ENCODE measurements at regions of chr9 and their contacts with region 1.

Region 1: DNA sequence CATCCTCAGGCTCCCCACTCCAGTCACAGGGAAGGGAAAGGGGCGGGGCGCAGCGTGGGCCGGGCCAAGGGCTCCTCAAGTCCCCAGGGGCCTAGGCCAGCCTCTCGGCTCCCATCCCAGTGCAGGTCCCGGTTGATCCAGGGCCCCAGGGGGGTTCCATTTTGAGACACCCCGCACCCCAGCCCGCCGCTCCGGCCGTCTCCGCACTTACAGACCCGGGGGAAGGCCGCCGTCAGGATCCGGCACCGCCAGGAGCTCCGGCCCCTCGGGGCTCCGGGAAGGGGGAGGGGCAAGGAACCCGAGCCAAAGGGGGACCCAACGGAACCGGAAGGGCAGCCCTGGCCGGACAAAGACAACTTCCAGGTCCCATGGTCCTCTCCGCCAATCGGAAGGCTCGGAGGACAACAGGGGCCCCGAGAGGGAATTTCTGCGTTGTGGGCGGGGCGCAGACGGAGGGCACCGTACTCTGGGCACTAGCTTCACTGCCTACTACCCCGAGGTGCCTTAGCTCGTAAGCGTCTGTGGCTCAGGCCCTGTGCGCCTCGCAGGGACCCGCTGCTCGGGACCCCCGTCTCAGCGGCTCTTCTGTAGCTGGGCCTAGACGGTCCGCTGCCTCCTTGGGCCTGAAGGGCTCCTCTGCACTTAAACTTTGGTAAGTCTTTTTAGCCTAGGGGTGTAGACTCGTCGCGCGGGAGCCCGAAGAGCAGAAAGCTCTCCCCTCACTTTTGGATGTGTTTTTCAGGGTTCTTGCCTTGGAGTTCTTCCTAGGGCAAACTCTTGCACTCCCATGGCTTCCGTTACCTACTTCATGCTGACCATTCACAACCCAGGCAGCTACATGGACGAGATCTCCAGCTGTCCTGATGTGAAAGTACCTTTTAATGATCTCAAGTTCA is at the start of gene ZBTB26:
- DNase-seq: peak; percentile 90
- H3K4me3 Mint-ChIP-seq: no peak within 1 kb of the TSS
- H3K27ac Mint-ChIP-seq: peak within 1 kb of the TSS; percentile 79
- H3K4me1 Mint-ChIP-seq: peaks cover 13% of the 10 kb centered on the region
- H3K27me3 Mint-ChIP-seq: no peaks in the 10 kb centered on the region
- total RNA-seq, gene ZBTB26: 8.4 to 8.5 TPM

Region 2: DNA sequence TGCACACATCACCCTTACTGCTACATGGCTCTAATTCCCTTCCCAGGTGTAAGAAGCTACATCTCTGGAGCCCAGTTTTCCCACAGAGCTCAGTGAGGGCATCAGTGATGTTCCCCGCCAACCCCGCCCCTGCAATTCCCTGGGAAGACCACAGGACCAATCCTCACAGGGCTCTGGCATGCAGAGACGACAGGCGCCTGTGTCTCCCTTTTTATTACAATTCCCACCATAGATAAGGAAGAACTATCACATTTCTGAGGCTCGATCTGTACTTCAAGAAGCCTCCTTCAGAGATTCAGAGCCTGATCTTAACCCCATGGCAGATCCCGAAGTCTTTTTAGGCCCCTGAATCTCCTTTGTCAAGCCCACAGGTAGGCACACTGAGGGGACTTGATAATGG is 189.5 kb before region 1 on chr9 and contains the start of gene OR1L6:
- CTCF ChIA-PET with region 1: no interaction called
- POLR2A ChIA-PET with region 1: no interaction called
- DNase-seq: no peak
- H3K4me3 Mint-ChIP-seq: no peak within 1 kb of the TSS
- H3K27ac Mint-ChIP-seq: no peak within 1 kb of the TSS
- H3K4me1 Mint-ChIP-seq: no peaks in the 10 kb centered on the region
- H3K27me3 Mint-ChIP-seq: no peaks in the 10 kb centered on the region
- total RNA-seq, gene OR1L6: not detected

Region 3: GRCh38 chr9:122797316-122798063 is 134.0 kb before region 1 on chr9:
- CTCF ChIA-PET with region 1: no interaction called
- POLR2A ChIA-PET with region 1: no interaction called
- DNase-seq: no peak
- H3K4me3 Mint-ChIP-seq: no peak overlapping the region
- H3K27ac Mint-ChIP-seq: no peak overlapping the region
- H3K4me1 Mint-ChIP-seq: no peaks in the 10 kb centered on the region
- H3K27me3 Mint-ChIP-seq: no peaks in the 10 kb centered on the region

Region 4: DNA sequence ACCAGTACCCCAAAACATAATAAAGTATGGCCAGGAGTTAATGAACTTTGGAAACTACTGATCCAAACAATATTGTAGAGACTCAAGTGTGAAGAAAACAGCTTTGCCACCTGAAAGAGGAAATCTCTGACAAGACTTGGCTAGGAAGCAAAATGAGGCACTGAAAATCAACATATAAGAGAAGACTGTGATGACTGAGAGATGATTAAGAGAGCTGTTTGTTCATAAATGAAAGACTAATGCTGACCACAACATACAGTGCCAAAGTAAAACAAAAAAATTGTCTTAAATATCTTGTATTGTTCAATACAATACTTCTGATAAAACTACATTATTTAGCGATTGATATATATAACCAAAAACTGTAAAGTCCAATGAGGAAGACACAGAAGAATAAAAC is 33.5 kb before region 1 on chr9:
- CTCF ChIA-PET with region 1: interaction called, 5 read pairs
- POLR2A ChIA-PET with region 1: interaction called, 48 read pairs
- DNase-seq: no peak
- H3K4me3 Mint-ChIP-seq: no peak overlapping the region
- H3K27ac Mint-ChIP-seq: peak overlapping the region; percentile 12
- H3K4me1 Mint-ChIP-seq: peaks cover 39% of the 10 kb centered on the region
- H3K27me3 Mint-ChIP-seq: no peaks in the 10 kb centered on the region

Region 5: GRCh38 chr9:122912964-122913673 is 18.4 kb before region 1 on chr9 and contains the start of gene ZBTB6:
- CTCF ChIA-PET with region 1: interaction called, 19 read pairs
- POLR2A ChIA-PET with region 1: interaction called, 43 read pairs
- DNase-seq: peak; percentile 76
- H3K4me3 Mint-ChIP-seq: peak within 1 kb of the TSS; percentile 96
- H3K27ac Mint-ChIP-seq: peak within 1 kb of the TSS; percentile 99
- H3K4me1 Mint-ChIP-seq: peaks cover 33% of the 10 kb centered on the region
- H3K27me3 Mint-ChIP-seq: no peaks in the 10 kb centered on the region
- total RNA-seq, gene ZBTB6: 12.1 to 12.7 TPM

Measured in activated CD4-positive, alpha-beta memory T cell treated with anti-CD3 and anti-CD28 coated beads, Interleukin-2, amount 10 ng/mL, durations not matched to agents 7 days and 5 days (primary cell).